Mammary epithelial cell (primary cell): ENCODE measurements at regions of chr16 and their contacts with region 1.

Region 1: DNA sequence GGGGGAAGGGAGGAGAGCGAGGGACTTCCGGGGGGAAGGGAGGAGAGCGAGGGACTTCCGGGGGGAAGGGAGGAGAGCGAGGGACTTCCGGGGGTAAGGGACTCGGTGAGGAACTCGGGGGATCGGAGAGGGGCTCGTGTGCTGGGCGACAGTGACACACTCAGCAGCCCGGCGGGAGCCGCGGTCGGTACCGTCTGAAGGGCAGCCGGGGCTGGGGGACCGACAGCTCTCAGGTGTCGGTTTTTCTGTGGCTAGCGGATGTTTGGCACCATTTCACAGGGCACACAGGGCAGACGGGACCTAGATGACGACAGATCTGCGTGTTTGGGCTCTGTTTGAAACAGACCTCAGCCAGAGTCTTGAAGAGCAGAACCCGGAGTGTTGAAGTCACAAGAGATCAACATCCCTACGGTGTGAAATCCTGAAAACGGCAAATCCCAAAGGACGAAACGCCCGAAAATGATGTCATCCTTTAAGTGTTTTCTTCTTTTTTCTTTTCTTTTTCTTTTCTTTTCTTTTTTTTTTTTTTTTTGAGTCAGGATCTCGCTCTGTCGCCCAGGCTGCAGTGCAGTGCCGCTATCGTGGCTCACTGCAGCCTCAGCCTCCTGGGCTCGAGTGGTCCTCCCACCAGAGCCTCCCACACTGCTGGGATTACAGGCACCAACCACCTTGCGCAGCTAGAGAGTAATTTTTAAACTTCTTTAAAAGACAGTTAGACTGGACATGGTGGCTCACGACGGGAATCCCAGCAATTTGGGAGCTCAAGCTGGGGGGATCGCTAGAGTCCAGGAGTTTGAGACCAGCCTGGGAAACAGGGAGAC is 23.9 kb downstream of the ZNF778 start:
- DNase-seq: peak; percentile 70
- H3K4me3 ChIP-seq: peak overlapping the region; percentile 51 to 79 (median 77)
- H3K27ac ChIP-seq: peak overlapping the region; percentile 66
- H3K4me1 ChIP-seq: no peaks in the 10 kb centered on the region
- H3K27me3 ChIP-seq: no peaks in the 10 kb centered on the region
- CTCF ChIP-seq: no peak

Region 2: GRCh38 chr16:89545831-89546574 is 304.6 kb after region 1 on chr16:
- CTCF ChIA-PET with region 1: no interaction called
- dilution Hi-C with region 1: no loop called
- in situ Hi-C with region 1: no loop called
- intact Hi-C with region 1: loop called (anchors 1 kb)
- DNase-seq: no peak
- H3K4me3 ChIP-seq: no peak overlapping the region
- H3K27ac ChIP-seq: no peak overlapping the region
- H3K4me1 ChIP-seq: no peaks in the 10 kb centered on the region
- H3K27me3 ChIP-seq: no peaks in the 10 kb centered on the region
- CTCF ChIP-seq: no peak

Region 3: DNA sequence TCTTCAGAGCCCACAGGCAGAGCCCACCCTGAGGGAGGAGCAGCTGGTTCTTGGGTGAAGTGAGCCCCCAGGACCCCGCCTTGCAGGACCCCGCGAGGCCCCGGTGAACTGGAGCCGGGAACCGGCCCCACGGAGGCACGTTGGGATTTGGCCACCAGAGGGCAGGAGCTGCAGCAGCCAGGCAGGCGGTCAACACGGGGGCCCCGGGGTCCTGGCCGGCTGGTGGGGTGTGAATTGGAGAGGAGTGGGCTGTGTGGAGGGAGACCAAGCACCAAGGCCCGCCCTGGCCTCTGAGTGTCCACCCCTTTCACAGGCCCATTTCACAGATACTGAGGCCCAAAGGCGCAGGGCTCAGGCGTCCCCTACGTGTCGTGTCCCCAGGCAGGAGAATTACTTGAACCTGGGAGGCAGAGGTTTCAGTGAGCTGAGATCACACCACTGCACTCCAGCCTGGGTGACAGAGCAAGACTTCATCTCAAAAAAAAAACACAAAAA is 374.2 kb after region 1 on chr16:
- CTCF ChIA-PET with region 1: no interaction called
- dilution Hi-C with region 1: no loop called
- in situ Hi-C with region 1: no loop called
- intact Hi-C with region 1: no loop called
- DNase-seq: no peak
- H3K4me3 ChIP-seq: no peak overlapping the region
- H3K27ac ChIP-seq: no peak overlapping the region
- H3K4me1 ChIP-seq: no peaks in the 10 kb centered on the region
- H3K27me3 ChIP-seq: no peaks in the 10 kb centered on the region
- CTCF ChIP-seq: peak; percentile 44 to 79